Aorta (tissue), 5 donors: ENCODE measurements at regions of chr6 and their contacts with region 1.

Region 1: DNA sequence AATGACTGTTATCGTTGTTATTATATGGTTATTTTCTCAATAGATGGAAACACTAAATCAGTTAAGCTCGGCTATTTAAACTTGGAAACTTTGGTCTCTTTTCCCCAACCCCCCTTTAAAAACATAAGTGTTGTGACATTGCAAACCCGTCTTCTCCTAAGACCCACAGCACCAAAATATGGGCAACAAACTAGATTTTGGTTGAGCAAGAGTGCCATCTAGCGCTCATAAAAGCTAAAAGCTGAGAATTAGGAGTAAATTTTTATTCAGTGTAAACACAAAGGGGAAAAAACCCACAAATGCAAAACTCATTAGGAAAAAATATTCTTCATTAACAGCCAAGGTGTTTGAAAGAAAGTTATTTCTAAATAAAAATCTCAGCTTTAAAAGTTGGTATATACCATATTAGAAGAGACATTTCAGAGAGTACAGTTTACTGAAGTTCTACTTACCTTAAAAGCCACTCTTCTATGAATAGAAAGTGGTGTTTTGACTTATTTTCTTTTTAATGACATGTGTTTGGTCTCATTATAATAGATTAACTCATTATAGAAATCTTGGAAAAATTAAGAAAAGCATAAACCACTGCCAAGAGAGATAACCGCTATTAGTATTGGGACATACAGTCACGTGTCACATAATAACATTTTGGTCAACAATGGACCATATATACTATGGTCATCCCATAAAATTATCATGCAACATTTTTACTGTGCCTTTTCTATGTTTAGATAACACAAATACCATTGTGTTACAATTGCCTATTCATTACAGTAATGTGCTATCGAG is 21.1 kb downstream of the SESN1 start:
- DNase-seq: no peak
- ATAC-seq: peak; percentile 78
- H3K4me3 ChIP-seq: no peak overlapping the region
- H3K27ac ChIP-seq: no peak overlapping the region
- H3K4me1 ChIP-seq: peaks cover 0 to 2% of the 10 kb centered on the region in 2 donors
- H3K27me3 ChIP-seq: no peaks in the 10 kb centered on the region

Region 2: GRCh38 chr6:108541838-108542759 is 531.4 kb before region 1 on chr6:
- intact Hi-C with region 1: loop called (anchors 2 kb)
- DNase-seq: peak in 1 of 2 donors; percentile 80
- ATAC-seq: peak; percentile 82
- H3K4me3 ChIP-seq: no peak overlapping the region
- H3K27ac ChIP-seq: no peak overlapping the region
- H3K4me1 ChIP-seq: no peaks in the 10 kb centered on the region
- H3K27me3 ChIP-seq: no peaks in the 10 kb centered on the region

Region 3: DNA sequence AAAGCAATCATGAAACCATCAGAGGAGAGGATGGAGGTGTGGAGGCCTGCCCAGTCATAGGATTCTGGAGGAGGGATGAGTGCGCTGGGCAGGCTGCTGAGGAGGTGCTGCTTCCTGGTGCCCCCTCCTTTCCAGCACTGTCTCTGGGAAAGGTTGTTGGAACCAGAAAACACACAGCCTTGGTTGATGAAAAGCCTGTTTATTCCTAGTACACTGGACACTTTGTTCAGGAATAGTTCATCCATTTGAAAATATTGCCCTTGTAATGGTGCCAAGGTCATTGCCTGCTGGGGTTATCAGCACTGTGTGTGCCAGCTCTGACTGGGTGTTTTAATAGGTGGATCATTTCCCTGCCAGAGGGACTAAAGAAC is 309.0 kb before region 1 on chr6:
- intact Hi-C with region 1: no loop called
- DNase-seq: no peak
- ATAC-seq: no peak
- H3K4me3 ChIP-seq: no peak overlapping the region
- H3K27ac ChIP-seq: no peak overlapping the region
- H3K4me1 ChIP-seq: no peaks in the 10 kb centered on the region
- H3K27me3 ChIP-seq: no peaks in the 10 kb centered on the region

Region 4: GRCh38 chr6:108782179-108783041 is 291.1 kb before region 1 on chr6:
- intact Hi-C with region 1: loop called in 1 of 2 experiments (anchors 10 kb)
- DNase-seq: peak; percentile 88 to 93
- ATAC-seq: peak; percentile 91
- H3K4me3 ChIP-seq: no peak overlapping the region
- H3K27ac ChIP-seq: no peak overlapping the region
- H3K4me1 ChIP-seq: no peaks in the 10 kb centered on the region
- H3K27me3 ChIP-seq: no peaks in the 10 kb centered on the region

Region 5: DNA sequence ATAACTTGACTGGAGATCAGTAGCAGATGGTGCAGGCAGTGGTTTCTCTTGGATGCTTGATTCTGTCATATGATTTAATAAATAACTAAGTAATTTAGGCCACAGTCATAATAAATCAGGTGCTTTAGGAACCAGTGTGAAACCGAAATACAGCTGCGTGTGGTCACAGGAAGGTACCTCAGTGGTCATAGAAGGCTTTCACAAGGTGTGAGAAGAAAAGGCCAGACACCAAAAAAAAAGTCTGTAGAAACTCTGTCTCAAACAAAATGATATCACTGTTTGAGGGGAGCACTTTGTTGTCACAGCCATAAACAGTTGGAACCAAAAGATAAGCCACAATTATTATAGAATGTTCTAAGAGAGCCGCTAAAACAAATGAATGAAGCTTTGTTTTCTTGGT is 168.8 kb before region 1 on chr6:
- intact Hi-C with region 1: loop called (anchors 5 kb)
- DNase-seq: no peak
- ATAC-seq: no peak
- H3K4me3 ChIP-seq: no peak overlapping the region
- H3K27ac ChIP-seq: no peak overlapping the region
- H3K4me1 ChIP-seq: peaks cover 0 to 2% of the 10 kb centered on the region in 2 donors
- H3K27me3 ChIP-seq: no peaks in the 10 kb centered on the region

Region 6: GRCh38 chr6:109009236-109009961 is 64.1 kb before region 1 on chr6:
- intact Hi-C with region 1: loop called in 1 of 2 experiments (anchors 5 kb)
- DNase-seq: peak; percentile 97
- ATAC-seq: peak; percentile 97
- H3K4me3 ChIP-seq: peak overlapping the region; percentile 76 to 81
- H3K27ac ChIP-seq: peak overlapping the region in 1 of 2 donors; percentile 94
- H3K4me1 ChIP-seq: no peaks in the 10 kb centered on the region
- H3K27me3 ChIP-seq: no peaks in the 10 kb centered on the region

Region 7: GRCh38 chr6:109139109-109139508 is 65.6 kb after region 1 on chr6:
- intact Hi-C with region 1: no loop called
- DNase-seq: no peak
- ATAC-seq: no peak
- H3K4me3 ChIP-seq: no peak overlapping the region
- H3K27ac ChIP-seq: no peak overlapping the region
- H3K4me1 ChIP-seq: no peaks in the 10 kb centered on the region
- H3K27me3 ChIP-seq: no peaks in the 10 kb centered on the region